CD8-positive, alpha-beta T cell (primary cell): ENCODE measurements at regions of chr1 and their contacts with region 1.

Region 1: DNA sequence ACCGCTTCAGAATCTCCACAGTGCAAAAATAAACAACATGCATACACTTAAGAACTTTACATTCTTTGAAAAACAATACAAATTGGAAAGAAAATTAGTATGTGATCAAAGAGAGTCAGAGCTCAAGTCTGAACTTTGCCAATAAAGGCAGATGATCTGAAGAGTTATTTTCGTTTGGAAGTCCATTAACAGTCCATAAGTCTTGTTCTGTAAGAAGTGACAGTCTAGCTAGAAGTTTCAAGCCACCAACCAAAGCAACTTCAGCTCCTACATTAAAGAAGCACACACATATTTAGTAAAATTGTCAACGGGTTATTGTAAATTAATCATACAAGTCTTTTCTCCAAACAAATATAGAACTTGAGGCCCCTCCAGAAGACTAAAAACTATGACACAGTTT is 20.7 kb downstream of the ANGEL2 start:
- DNase-seq: no peak
- ATAC-seq: no peak
- H3K4me3 ChIP-seq: no peak overlapping the region
- H3K4me3 Mint-ChIP-seq: no peak overlapping the region
- H3K27ac ChIP-seq: no peak overlapping the region
- H3K27ac Mint-ChIP-seq: no peak overlapping the region
- H3K4me1 ChIP-seq: no peaks in the 10 kb centered on the region
- H3K4me1 Mint-ChIP-seq: peaks cover 3% of the 10 kb centered on the region
- H3K27me3 ChIP-seq: no peaks in the 10 kb centered on the region
- H3K27me3 Mint-ChIP-seq: no peaks in the 10 kb centered on the region
- CTCF ChIP-seq: no peak

Region 2: DNA sequence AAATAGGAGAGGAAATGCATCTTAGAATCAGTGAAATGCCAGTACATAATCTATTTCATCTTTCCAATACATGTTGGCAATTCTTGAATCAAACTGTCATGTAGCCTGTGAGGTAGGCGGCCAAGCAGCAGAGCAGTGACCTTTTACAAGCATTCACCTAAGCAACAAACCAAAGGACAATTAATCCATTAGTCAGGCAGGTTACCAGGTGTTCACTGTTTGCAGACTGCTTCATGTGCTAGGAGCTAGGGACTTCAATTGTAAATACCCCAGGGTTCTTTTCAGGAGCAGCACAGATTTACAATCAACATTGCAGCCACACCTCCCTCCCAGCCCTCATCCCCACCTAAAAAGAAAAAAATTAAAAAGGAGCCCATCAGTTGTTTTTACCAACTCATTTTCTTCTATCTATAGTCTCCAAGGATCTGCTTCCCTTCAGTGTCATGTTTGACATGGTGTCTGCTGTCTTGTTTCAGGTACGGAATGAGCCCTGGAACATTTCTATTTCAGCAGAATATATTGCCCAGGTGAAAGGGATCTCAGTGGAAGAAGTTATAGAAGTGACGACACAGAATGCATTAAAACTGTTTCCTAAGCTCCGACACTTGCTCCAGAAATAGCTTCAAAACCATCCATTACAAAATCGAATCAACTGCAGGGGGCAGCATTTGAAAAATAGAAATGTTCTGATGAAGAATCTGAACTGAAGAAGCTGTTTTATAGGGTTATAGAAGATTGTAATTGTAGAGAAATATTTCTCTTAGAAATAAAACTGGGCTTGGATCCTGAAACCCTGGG is 180.2 kb before region 1 on chr1:
- CTCF ChIA-PET with region 1: interaction called, 4 read pairs
- POLR2A ChIA-PET with region 1: no interaction called
- intact Hi-C with region 1: loop called in 1 of 2 experiments (anchors 1 kb)
- DNase-seq: peak in 2 of 9 experiments; percentile 8 to 29
- ATAC-seq: no peak
- H3K4me3 ChIP-seq: no peak overlapping the region
- H3K4me3 Mint-ChIP-seq: no peak overlapping the region
- H3K27ac ChIP-seq: no peak overlapping the region
- H3K27ac Mint-ChIP-seq: no peak overlapping the region
- H3K4me1 ChIP-seq: no peaks in the 10 kb centered on the region
- H3K4me1 Mint-ChIP-seq: no peaks in the 10 kb centered on the region
- H3K27me3 ChIP-seq: no peaks in the 10 kb centered on the region
- H3K27me3 Mint-ChIP-seq: no peaks in the 10 kb centered on the region
- CTCF ChIP-seq: no peak

Region 3: GRCh38 chr1:212928323-212929291 is 66.3 kb before region 1 on chr1:
- CTCF ChIA-PET with region 1: no interaction called
- POLR2A ChIA-PET with region 1: no interaction called
- intact Hi-C with region 1: no loop called
- DNase-seq: no peak
- ATAC-seq: no peak
- H3K4me3 ChIP-seq: no peak overlapping the region
- H3K4me3 Mint-ChIP-seq: no peak overlapping the region
- H3K27ac ChIP-seq: no peak overlapping the region
- H3K27ac Mint-ChIP-seq: no peak overlapping the region
- H3K4me1 ChIP-seq: no peaks in the 10 kb centered on the region
- H3K4me1 Mint-ChIP-seq: no peaks in the 10 kb centered on the region
- H3K27me3 ChIP-seq: no peaks in the 10 kb centered on the region
- H3K27me3 Mint-ChIP-seq: peaks cover 4% of the 10 kb centered on the region
- CTCF ChIP-seq: no peak